PC-9 (cell line): ENCODE measurements at regions of chr2 and their contacts with region 1.

Region 1: GRCh38 chr2:190648289-190649034 is 421 bp upstream of the NAB1 start:
- DNase-seq: peak; percentile 65 to 82
- H3K4me3 ChIP-seq: peak overlapping the region; percentile 73
- H3K27ac ChIP-seq: peak overlapping the region; percentile 42
- H3K4me1 ChIP-seq: peaks cover 13% of the 10 kb centered on the region
- H3K27me3 ChIP-seq: no peaks in the 10 kb centered on the region
- CTCF ChIP-seq: no peak

Region 2: GRCh38 chr2:190534310-190535120 is 113.9 kb before region 1 on chr2 and contains the start of gene NEMP2:
- CTCF ChIA-PET with region 1: no interaction called
- POLR2A ChIA-PET with region 1: no interaction called
- intact Hi-C with region 1: loop called (anchors 10 kb)
- DNase-seq: peak; percentile 40 to 74
- H3K4me3 ChIP-seq: peak within 1 kb of the TSS; percentile 87
- H3K27ac ChIP-seq: peak within 1 kb of the TSS; percentile 74
- H3K4me1 ChIP-seq: 0 out of 2 replicates have a peak, but pooled peaks cover 6% of the 10 kb centered on the region
- H3K27me3 ChIP-seq: no peaks in the 10 kb centered on the region
- CTCF ChIP-seq: no peak
- total RNA-seq, gene NEMP2: 8.3 and 9.7 TPM in 2 replicates

Region 3: DNA sequence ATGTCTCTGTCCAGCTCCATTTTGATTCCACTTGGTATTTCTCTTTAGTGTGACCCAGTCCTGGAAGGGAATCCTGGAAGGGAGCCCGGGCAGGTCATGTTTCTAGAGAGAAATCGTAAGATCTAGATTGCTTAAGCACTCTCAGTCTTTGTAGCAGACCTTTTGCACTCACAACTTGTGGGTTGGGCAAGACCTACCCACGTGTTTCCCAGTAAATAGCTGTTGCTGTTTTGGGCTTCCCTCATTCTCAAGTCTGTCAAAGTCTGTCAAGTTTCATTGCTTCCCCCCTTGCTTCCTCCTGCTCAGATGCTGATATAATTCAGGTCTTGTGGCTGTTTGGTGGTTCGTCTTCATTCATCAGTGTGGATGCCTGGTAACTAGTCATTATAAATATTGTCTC is 96.5 kb before region 1 on chr2:
- CTCF ChIA-PET with region 1: no interaction called
- POLR2A ChIA-PET with region 1: no interaction called
- intact Hi-C with region 1: no loop called
- DNase-seq: no peak
- H3K4me3 ChIP-seq: no peak overlapping the region
- H3K27ac ChIP-seq: no peak overlapping the region
- H3K4me1 ChIP-seq: no peaks in the 10 kb centered on the region
- H3K27me3 ChIP-seq: no peaks in the 10 kb centered on the region
- CTCF ChIP-seq: no peak

Region 4: GRCh38 chr2:190607014-190607597 is 41.4 kb before region 1 on chr2:
- CTCF ChIA-PET with region 1: no interaction called
- POLR2A ChIA-PET with region 1: no interaction called
- intact Hi-C with region 1: loop called (anchors 5 kb)
- DNase-seq: peak in 1 of 2 experiments; percentile 4
- H3K4me3 ChIP-seq: peak overlapping the region; percentile 39; the same call in 1 of the 2 replicates
- H3K27ac ChIP-seq: peak overlapping the region; percentile 62
- H3K4me1 ChIP-seq: peaks cover 19% of the 10 kb centered on the region
- H3K27me3 ChIP-seq: no peaks in the 10 kb centered on the region
- CTCF ChIP-seq: no peak